ENCODE measurements at regions of chrX and their contacts with region 1.

Region 1: DNA sequence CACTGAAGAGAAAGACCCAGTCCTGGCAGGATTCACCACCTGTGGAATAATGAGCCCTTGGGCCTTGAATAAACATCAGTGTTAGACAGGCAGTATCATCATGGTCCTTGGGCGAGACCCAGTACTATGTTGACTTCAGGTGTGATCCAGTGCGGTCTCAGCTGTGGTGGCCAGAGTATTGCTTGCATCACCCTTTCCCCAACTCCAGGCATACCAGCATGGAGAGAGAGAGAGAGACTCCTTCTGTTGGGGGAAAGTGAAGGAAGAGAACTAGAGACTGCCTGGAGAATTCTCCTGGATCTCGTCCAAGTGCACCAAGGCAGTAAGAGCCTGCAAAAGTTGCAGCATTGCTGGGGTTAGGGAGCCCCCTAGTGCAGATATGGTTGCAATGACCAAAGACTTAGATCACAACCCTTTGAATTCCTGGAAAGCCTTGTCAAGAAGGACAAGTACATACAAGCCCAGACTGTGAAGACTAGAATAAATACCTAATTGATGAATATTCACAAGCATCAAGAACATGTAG is 61.1 kb upstream of the VAMP7 start:
- DNase-seq: peak; percentile 80
- H3K4me3 Mint-ChIP-seq: no peak overlapping the region
- H3K27ac Mint-ChIP-seq: no peak overlapping the region
- H3K4me1 Mint-ChIP-seq: peaks cover 2% of the 10 kb centered on the region
- H3K27me3 Mint-ChIP-seq: peaks cover 12% of the 10 kb centered on the region

Region 2: GRCh38 chrX:155094468-155095061 is 725.5 kb before region 1 on chrX:
- intact Hi-C with region 1: loop called (anchors 1 kb)
- DNase-seq: peak; percentile 73
- H3K4me3 Mint-ChIP-seq: no peak overlapping the region
- H3K27ac Mint-ChIP-seq: no peak overlapping the region
- H3K4me1 Mint-ChIP-seq: peaks cover 2% of the 10 kb centered on the region
- H3K27me3 Mint-ChIP-seq: no peaks in the 10 kb centered on the region

Region 3: GRCh38 chrX:155592981-155593380 is 227.0 kb before region 1 on chrX:
- intact Hi-C with region 1: no loop called
- DNase-seq: no peak
- H3K4me3 Mint-ChIP-seq: no peak overlapping the region
- H3K27ac Mint-ChIP-seq: no peak overlapping the region
- H3K4me1 Mint-ChIP-seq: no peaks in the 10 kb centered on the region
- H3K27me3 Mint-ChIP-seq: no peaks in the 10 kb centered on the region

Region 4: GRCh38 chrX:155888139-155888538 is 68.1 kb after region 1 on chrX:
- intact Hi-C with region 1: no loop called
- DNase-seq: no peak
- H3K4me3 Mint-ChIP-seq: no peak overlapping the region
- H3K27ac Mint-ChIP-seq: no peak overlapping the region
- H3K4me1 Mint-ChIP-seq: peaks cover 19% of the 10 kb centered on the region
- H3K27me3 Mint-ChIP-seq: no peaks in the 10 kb centered on the region